ENCODE measurements at regions of chr15 and their contacts with region 1.

Region 1: GRCh38 chr15:90931737-90932659 is at the start of gene HDDC3:
- DNase-seq: peak; percentile 92 to 94
- H3K4me3 ChIP-seq: peak within 1 kb of the TSS; percentile 71
- H3K4me3 Mint-ChIP-seq: peak within 1 kb of the TSS; percentile 96
- H3K27ac Mint-ChIP-seq: peak within 1 kb of the TSS; percentile 93
- H3K4me1 ChIP-seq: peaks cover 16% of the 10 kb centered on the region
- H3K4me1 Mint-ChIP-seq: peaks cover 22% of the 10 kb centered on the region
- H3K27me3 ChIP-seq: no peaks in the 10 kb centered on the region; the same call in 1 of the 2 replicates
- H3K27me3 Mint-ChIP-seq: no peaks in the 10 kb centered on the region
- CTCF ChIP-seq: peak; percentile 75 to 93
- total RNA-seq, gene HDDC3: 20.0 and 21.6 TPM in 2 replicates

Region 2: GRCh38 chr15:90376789-90377188 is 555.2 kb before region 1 on chr15:
- CTCF ChIA-PET with region 1: interaction called, 14 read pairs
- POLR2A ChIA-PET with region 1: no interaction called
- intact Hi-C with region 1: no loop called
- DNase-seq: no peak
- H3K4me3 ChIP-seq: no peak overlapping the region
- H3K4me3 Mint-ChIP-seq: no peak overlapping the region
- H3K27ac Mint-ChIP-seq: no peak overlapping the region
- H3K4me1 ChIP-seq: no peaks in the 10 kb centered on the region
- H3K4me1 Mint-ChIP-seq: peaks cover 6% of the 10 kb centered on the region
- H3K27me3 ChIP-seq: no peaks in the 10 kb centered on the region
- H3K27me3 Mint-ChIP-seq: no peaks in the 10 kb centered on the region
- CTCF ChIP-seq: no peak

Region 3: GRCh38 chr15:90686435-90687218 is 245.4 kb before region 1 on chr15:
- CTCF ChIA-PET with region 1: no interaction called
- POLR2A ChIA-PET with region 1: no interaction called
- intact Hi-C with region 1: no loop called
- DNase-seq: no peak
- H3K4me3 ChIP-seq: no peak overlapping the region
- H3K4me3 Mint-ChIP-seq: no peak overlapping the region
- H3K27ac Mint-ChIP-seq: no peak overlapping the region
- H3K4me1 ChIP-seq: no peaks in the 10 kb centered on the region
- H3K4me1 Mint-ChIP-seq: no peaks in the 10 kb centered on the region
- H3K27me3 ChIP-seq: no peaks in the 10 kb centered on the region
- H3K27me3 Mint-ChIP-seq: no peaks in the 10 kb centered on the region
- CTCF ChIP-seq: no peak

Region 4: GRCh38 chr15:90762109-90762508 is 169.9 kb before region 1 on chr15:
- CTCF ChIA-PET with region 1: no interaction called
- POLR2A ChIA-PET with region 1: no interaction called
- intact Hi-C with region 1: no loop called
- DNase-seq: no peak
- H3K4me3 ChIP-seq: no peak overlapping the region
- H3K4me3 Mint-ChIP-seq: no peak overlapping the region
- H3K27ac Mint-ChIP-seq: no peak overlapping the region
- H3K4me1 ChIP-seq: no peaks in the 10 kb centered on the region
- H3K4me1 Mint-ChIP-seq: no peaks in the 10 kb centered on the region
- H3K27me3 ChIP-seq: no peaks in the 10 kb centered on the region
- H3K27me3 Mint-ChIP-seq: no peaks in the 10 kb centered on the region
- CTCF ChIP-seq: no peak

Region 5: GRCh38 chr15:90869601-90870353 is 62.2 kb before region 1 on chr15:
- CTCF ChIA-PET with region 1: interaction called, 11 read pairs
- POLR2A ChIA-PET with region 1: no interaction called
- intact Hi-C with region 1: loop called (anchors 2 kb)
- DNase-seq: peak; percentile 60 to 78
- H3K4me3 ChIP-seq: no peak overlapping the region
- H3K4me3 Mint-ChIP-seq: peak overlapping the region; percentile 71
- H3K27ac Mint-ChIP-seq: peak overlapping the region; percentile 64
- H3K4me1 ChIP-seq: peaks cover 66% of the 10 kb centered on the region
- H3K4me1 Mint-ChIP-seq: peaks cover 38% of the 10 kb centered on the region
- H3K27me3 ChIP-seq: no peaks in the 10 kb centered on the region
- H3K27me3 Mint-ChIP-seq: no peaks in the 10 kb centered on the region
- CTCF ChIP-seq: no peak

Region 6: GRCh38 chr15:90902040-90902839 is 29.8 kb before region 1 on chr15:
- CTCF ChIA-PET with region 1: interaction called, 53 read pairs
- POLR2A ChIA-PET with region 1: interaction called, 7 read pairs
- intact Hi-C with region 1: loop called (anchors 1 kb)
- DNase-seq: peak; percentile 74 to 83
- H3K4me3 ChIP-seq: peak overlapping the region; percentile 51
- H3K4me3 Mint-ChIP-seq: peak overlapping the region; percentile 89
- H3K27ac Mint-ChIP-seq: peak overlapping the region; percentile 67
- H3K4me1 ChIP-seq: 0 out of 2 replicates have a peak, but pooled peaks cover 7% of the 10 kb centered on the region
- H3K4me1 Mint-ChIP-seq: no peaks in the 10 kb centered on the region
- H3K27me3 ChIP-seq: no peaks in the 10 kb centered on the region
- H3K27me3 Mint-ChIP-seq: peaks cover 2% of the 10 kb centered on the region
- CTCF ChIP-seq: peak; percentile 67 to 89

Region 7: DNA sequence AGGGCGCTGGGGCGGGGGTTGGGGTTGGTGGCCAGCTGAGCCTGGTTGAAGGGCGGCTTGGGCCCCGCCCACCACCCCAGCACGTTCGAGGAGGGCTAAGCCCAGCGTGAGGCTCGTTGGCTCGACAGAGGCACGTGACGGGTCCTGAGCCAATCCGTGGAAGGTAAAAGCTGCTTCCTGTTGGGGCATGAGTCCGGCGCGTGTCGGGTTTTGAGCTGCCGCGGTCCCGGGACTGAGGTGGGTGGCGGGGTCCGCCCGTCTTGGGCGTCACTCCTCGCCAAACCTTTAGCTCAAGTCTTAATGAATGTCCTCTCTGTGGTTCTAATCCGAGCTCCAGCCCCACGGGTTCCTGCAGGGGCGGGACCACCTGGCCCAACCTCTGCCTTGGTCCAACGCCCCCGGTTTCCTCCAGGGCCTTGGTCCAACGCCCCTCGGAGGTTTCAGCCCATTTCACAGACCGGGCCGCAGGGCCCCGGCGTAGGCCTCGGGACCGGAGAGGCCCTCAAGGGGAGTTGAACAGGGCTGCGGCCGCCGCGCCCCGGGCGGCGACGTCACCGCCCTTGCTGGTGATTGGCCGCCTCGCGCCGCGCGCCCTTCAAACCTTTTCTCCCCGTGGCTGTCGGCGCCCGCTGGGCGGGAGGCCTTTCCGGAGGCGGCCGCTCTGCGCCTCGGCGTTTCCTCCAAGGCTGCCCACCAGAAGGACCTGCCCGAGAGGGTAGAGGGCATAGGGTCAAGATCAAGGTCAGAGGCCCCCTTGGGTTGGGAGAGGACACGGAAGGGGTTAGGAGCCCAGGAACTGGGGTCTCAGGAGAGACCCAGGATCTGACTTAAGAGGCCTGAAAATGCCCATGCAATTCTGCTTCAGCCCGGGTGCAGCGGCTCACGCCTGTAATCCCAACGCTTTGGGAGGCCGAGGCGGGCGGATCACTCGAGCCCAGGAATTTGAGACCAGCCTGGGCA is 23.0 kb after region 1 on chr15 and contains the start of gene RCCD1:
- CTCF ChIA-PET with region 1: interaction called, 12 read pairs
- POLR2A ChIA-PET with region 1: interaction called, 24 read pairs
- intact Hi-C with region 1: loop called (anchors 2 kb)
- DNase-seq: peak; percentile 96 to 97
- H3K4me3 ChIP-seq: peak within 1 kb of the TSS; percentile 99
- H3K4me3 Mint-ChIP-seq: peak within 1 kb of the TSS; percentile 76
- H3K27ac Mint-ChIP-seq: peak within 1 kb of the TSS; percentile 87
- H3K4me1 ChIP-seq: peaks cover 4% of the 10 kb centered on the region
- H3K4me1 Mint-ChIP-seq: peaks cover 9% of the 10 kb centered on the region
- H3K27me3 ChIP-seq: no peaks in the 10 kb centered on the region
- H3K27me3 Mint-ChIP-seq: no peaks in the 10 kb centered on the region
- CTCF ChIP-seq: no peak
- total RNA-seq, gene RCCD1: 26.1 and 29.6 TPM in 2 replicates

Region 8: GRCh38 chr15:91246998-91247397 is 315.0 kb after region 1 on chr15:
- CTCF ChIA-PET with region 1: no interaction called
- POLR2A ChIA-PET with region 1: interaction called, 13 read pairs
- intact Hi-C with region 1: no loop called
- DNase-seq: no peak
- H3K4me3 ChIP-seq: no peak overlapping the region
- H3K4me3 Mint-ChIP-seq: no peak overlapping the region
- H3K27ac Mint-ChIP-seq: no peak overlapping the region
- H3K4me1 ChIP-seq: no peaks in the 10 kb centered on the region
- H3K4me1 Mint-ChIP-seq: no peaks in the 10 kb centered on the region
- H3K27me3 ChIP-seq: no peaks in the 10 kb centered on the region
- H3K27me3 Mint-ChIP-seq: peaks cover 10% of the 10 kb centered on the region
- CTCF ChIP-seq: no peak

Measured in Caco-2 (cell line).